IMR-90 (cell line): ENCODE measurements at regions of chr11 and their contacts with region 1.

Region 1: DNA sequence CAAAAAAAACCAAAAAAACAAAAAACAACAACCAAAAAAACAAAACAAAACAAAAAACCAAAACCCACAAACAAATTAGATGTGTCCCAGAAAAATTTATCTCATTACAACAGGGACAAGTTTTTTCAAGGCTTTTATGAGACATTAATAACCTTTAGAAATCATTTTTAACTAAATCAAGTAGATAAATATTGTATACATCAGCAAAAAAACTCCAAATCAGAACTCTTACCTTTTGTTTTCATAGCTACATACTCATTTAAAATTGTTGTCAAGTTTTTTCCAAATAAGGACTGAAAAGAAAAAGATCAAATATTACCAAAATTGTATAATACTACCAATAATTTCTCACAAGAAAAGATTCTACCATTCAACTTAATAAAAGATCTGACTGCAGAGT is 28.7 kb downstream of the NPAT start:
- DNase-seq: no peak
- ATAC-seq: no peak
- H3K4me3 ChIP-seq: no peak overlapping the region
- H3K27ac ChIP-seq: no peak overlapping the region
- H3K4me1 ChIP-seq: no peaks in the 10 kb centered on the region
- H3K27me3 ChIP-seq: no peaks in the 10 kb centered on the region
- CTCF ChIP-seq: no peak
- POLR2A ChIP-seq: no peak
- RAD21 ChIP-seq: no peak

Region 2: GRCh38 chr11:108121274-108122155 is 72.2 kb before region 1 on chr11 and contains the start of gene ACAT1:
- CTCF ChIA-PET with region 1: no interaction called
- POLR2A ChIA-PET with region 1: no interaction called
- dilution Hi-C with region 1: no loop called
- in situ Hi-C with region 1: no loop called
- intact Hi-C with region 1: no loop called
- DNase-seq: peak; percentile 82
- ATAC-seq: peak; percentile 98
- H3K4me3 ChIP-seq: peak within 1 kb of the TSS; percentile 86
- H3K27ac ChIP-seq: peak within 1 kb of the TSS; percentile 70
- H3K4me1 ChIP-seq: peaks cover 3% of the 10 kb centered on the region
- H3K27me3 ChIP-seq: no peaks in the 10 kb centered on the region
- CTCF ChIP-seq: peak; percentile 18; the same call in 1 of the 2 replicates
- POLR2A ChIP-seq: peak; percentile 83
- RAD21 ChIP-seq: no peak
- total RNA-seq, gene ACAT1: 57.7 and 87.2 TPM in 2 replicates

Region 3: DNA sequence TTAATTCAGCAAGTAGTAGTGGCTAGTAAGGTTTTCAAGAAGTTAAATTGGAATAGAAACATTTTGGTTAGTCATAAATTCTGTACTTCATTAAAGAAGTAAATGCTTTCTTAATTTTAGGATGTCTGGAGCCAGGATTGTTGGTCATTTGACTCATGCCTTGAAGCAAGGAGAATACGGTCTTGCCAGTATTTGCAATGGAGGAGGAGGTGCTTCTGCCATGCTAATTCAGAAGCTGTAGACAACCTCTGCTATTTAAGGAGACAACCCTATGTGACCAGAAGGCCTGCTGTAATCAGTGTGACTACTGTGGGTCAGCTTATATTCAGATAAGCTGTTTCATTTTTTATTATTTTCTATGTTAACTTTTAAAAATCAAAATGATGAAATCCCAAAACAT is 46.6 kb before region 1 on chr11:
- CTCF ChIA-PET with region 1: no interaction called
- POLR2A ChIA-PET with region 1: no interaction called
- dilution Hi-C with region 1: no loop called
- in situ Hi-C with region 1: no loop called
- intact Hi-C with region 1: loop called (anchors 5 kb)
- DNase-seq: no peak
- ATAC-seq: no peak
- H3K4me3 ChIP-seq: no peak overlapping the region
- H3K27ac ChIP-seq: no peak overlapping the region
- H3K4me1 ChIP-seq: no peaks in the 10 kb centered on the region
- H3K27me3 ChIP-seq: no peaks in the 10 kb centered on the region
- CTCF ChIP-seq: no peak
- POLR2A ChIP-seq: no peak
- RAD21 ChIP-seq: no peak

Region 4: DNA sequence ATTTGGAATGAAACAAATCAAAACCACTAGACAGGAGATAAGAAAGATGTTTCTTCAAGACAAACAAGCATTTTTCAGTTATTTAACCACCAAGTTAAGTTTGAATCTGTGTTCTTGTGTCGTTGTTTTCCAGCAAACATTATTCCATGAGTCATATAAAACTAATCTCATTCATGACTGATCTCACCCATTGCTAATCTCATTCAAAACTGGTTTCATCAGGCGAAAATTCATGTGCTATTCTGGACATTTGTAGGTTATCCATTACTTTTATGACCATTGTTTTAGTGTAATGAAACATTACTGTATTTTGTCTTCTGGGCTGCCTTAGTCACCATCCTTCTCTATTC is 692.9 kb after region 1 on chr11:
- CTCF ChIA-PET with region 1: no interaction called
- POLR2A ChIA-PET with region 1: no interaction called
- dilution Hi-C with region 1: no loop called
- in situ Hi-C with region 1: no loop called
- intact Hi-C with region 1: no loop called
- DNase-seq: peak; percentile 45
- ATAC-seq: no peak; the same call in 1 of the 2 replicates
- H3K4me3 ChIP-seq: no peak overlapping the region
- H3K27ac ChIP-seq: no peak overlapping the region
- H3K4me1 ChIP-seq: peaks cover 10% of the 10 kb centered on the region
- H3K27me3 ChIP-seq: no peaks in the 10 kb centered on the region
- CTCF ChIP-seq: no peak
- POLR2A ChIP-seq: no peak
- RAD21 ChIP-seq: no peak